ENCODE measurements at regions of chr2 and their contacts with region 1.

Region 1: DNA sequence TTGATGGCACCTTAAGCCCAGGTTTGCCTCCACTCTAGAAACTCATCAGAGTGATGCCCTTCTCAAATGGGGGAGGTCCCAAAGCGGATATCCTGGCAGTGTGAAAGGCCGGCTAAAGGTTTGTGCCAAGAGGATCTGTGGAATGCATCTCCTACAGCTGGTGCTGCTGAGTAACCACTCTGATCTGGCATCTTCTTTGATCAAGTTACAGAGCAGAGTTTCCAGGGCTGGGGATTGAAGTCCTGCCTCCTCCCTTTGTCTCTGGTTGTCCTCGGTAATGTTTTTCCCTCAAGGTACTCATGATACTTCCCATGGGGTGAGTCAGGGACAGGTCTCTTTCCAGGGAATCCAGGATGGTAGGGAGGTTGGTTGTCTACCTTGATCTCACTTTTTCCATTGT is 24.6 kb downstream of the PRKRA start:
- DNase-seq: no peak
- H3K4me3 Mint-ChIP-seq: no peak overlapping the region
- H3K27ac Mint-ChIP-seq: no peak overlapping the region
- H3K4me1 Mint-ChIP-seq: no peaks in the 10 kb centered on the region
- H3K27me3 Mint-ChIP-seq: no peaks in the 10 kb centered on the region
- CTCF ChIP-seq: no peak

Region 2: DNA sequence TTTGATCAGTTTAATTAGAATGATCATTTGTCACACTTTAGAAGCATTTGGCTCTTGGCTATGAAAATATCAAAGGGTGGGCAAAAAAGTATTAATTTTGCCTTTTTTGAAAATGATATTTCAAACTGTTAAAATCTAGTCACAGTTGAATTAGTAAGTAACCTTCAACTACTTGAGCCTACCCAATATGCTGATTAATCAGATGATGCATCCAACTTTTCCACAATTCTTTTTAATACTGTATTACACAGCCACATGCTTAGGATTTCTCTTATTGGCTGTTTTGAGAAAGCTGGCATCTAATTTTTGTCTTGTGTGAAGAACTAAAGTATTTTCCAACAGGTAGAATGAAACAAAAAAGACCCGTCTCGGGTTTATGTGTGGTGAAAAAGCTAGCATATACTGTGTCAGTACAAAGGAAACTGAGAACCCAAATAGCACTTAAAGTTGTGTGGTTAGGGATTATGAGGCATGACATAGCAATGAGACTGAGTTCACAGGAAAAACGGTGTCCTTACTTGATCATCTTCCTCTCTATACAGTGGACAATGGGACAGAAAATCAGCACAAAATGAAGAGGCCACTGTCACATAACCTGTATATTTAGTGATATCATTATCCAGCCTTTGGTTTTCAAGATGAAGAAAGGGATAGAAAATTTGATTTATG is 220.4 kb before region 1 on chr2:
- CTCF ChIA-PET with region 1: no interaction called
- intact Hi-C with region 1: no loop called
- DNase-seq: no peak
- H3K4me3 Mint-ChIP-seq: no peak overlapping the region
- H3K27ac Mint-ChIP-seq: no peak overlapping the region
- H3K4me1 Mint-ChIP-seq: no peaks in the 10 kb centered on the region
- H3K27me3 Mint-ChIP-seq: no peaks in the 10 kb centered on the region
- CTCF ChIP-seq: no peak

Region 3: GRCh38 chr2:178287652-178288344 is 138.6 kb before region 1 on chr2:
- CTCF ChIA-PET with region 1: interaction called, 10 read pairs
- intact Hi-C with region 1: no loop called
- DNase-seq: no peak
- H3K4me3 Mint-ChIP-seq: no peak overlapping the region
- H3K27ac Mint-ChIP-seq: no peak overlapping the region
- H3K4me1 Mint-ChIP-seq: peaks cover 7% of the 10 kb centered on the region
- H3K27me3 Mint-ChIP-seq: no peaks in the 10 kb centered on the region
- CTCF ChIP-seq: no peak

Region 4: DNA sequence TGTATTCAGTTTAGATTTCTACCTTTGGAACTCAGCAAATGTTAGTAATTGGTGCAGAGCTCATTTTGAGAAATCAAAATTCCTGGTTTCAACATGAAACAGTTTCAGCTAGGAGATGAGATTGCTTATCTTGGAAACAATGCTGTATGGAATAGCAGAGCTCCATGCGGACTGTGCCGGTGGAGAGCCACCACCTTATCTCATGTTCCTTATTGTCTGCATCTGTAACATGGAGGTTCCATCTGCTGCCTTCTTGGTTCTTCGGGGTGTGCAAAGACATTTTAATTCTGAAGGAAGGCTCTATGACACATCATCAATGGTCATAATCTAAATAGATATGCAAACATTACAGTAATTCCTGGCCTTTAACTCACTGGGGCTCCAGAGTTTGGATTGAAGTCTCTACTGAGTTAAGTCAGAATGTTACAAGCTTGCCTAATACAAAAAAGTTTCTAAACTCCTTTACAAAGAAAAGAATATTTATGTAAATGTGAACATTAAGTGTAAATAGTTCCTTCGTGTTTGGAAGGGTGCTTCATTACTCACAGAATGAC is 40.7 kb before region 1 on chr2:
- CTCF ChIA-PET with region 1: no interaction called
- intact Hi-C with region 1: no loop called
- DNase-seq: no peak
- H3K4me3 Mint-ChIP-seq: no peak overlapping the region
- H3K27ac Mint-ChIP-seq: no peak overlapping the region
- H3K4me1 Mint-ChIP-seq: no peaks in the 10 kb centered on the region
- H3K27me3 Mint-ChIP-seq: no peaks in the 10 kb centered on the region
- CTCF ChIP-seq: no peak